IMR-90 (cell line): ENCODE measurements at regions of chr5 and their contacts with region 1.

Region 1: DNA sequence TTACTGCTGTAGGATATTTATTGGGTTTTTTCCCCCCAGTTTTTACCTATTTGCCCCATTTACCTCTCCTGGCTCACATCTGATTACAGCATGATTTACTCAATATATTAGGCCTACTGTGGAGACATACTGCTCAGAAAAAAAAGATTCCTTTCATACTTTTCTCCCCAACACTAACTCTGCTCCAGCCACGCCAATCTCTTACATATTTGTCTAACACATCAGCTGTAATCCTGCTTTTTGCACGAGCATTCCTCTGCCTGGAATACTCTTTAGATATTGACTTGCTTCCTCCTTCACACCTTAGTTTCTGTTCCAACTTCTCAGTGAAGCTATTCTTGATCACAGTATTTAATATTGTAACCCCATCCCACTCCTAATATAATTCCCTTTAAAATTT is 158.1 kb upstream of the VCAN start:
- DNase-seq: peak; percentile 57
- ATAC-seq: peak; percentile 94
- H3K4me3 ChIP-seq: no peak overlapping the region
- H3K27ac ChIP-seq: no peak overlapping the region
- H3K4me1 ChIP-seq: no peaks in the 10 kb centered on the region
- H3K27me3 ChIP-seq: no peaks in the 10 kb centered on the region
- CTCF ChIP-seq: no peak
- POLR2A ChIP-seq: no peak
- RAD21 ChIP-seq: no peak

Region 2: DNA sequence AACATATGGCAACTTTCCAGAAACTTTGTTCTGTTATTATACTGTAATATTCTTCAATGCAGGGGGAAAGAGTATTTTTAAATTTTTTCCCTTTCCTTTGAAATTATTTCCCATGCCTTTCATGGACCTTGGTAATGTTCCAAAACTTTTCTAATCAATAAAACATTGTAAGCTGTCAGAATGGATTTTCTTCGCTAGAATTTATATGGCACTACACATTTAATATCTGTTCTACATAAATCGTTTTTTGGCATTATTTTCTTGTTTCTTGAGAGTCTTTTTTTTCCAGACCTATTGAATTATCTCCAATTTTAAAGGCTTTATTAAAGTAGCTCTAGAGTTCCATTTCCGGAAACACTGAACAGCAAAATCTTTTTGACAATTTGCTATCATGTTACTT is 485.2 kb before region 1 on chr5:
- CTCF ChIA-PET with region 1: no interaction called
- POLR2A ChIA-PET with region 1: interaction called, 15 read pairs
- dilution Hi-C with region 1: no loop called
- in situ Hi-C with region 1: no loop called
- intact Hi-C with region 1: no loop called
- DNase-seq: no peak
- ATAC-seq: no peak
- H3K4me3 ChIP-seq: no peak overlapping the region
- H3K27ac ChIP-seq: no peak overlapping the region
- H3K4me1 ChIP-seq: no peaks in the 10 kb centered on the region
- H3K27me3 ChIP-seq: no peaks in the 10 kb centered on the region
- CTCF ChIP-seq: no peak
- POLR2A ChIP-seq: no peak
- RAD21 ChIP-seq: no peak